CD8-positive, alpha-beta T cell (primary cell): ENCODE measurements at regions of chr6 and their contacts with region 1.

Region 1: GRCh38 chr6:46862381-46862780 is 59.4 kb downstream of the ADGRF5 start:
- DNase-seq: no peak
- ATAC-seq: no peak
- H3K4me3 ChIP-seq: no peak overlapping the region
- H3K4me3 Mint-ChIP-seq: no peak overlapping the region
- H3K27ac ChIP-seq: no peak overlapping the region
- H3K27ac Mint-ChIP-seq: no peak overlapping the region
- H3K4me1 ChIP-seq: no peaks in the 10 kb centered on the region
- H3K4me1 Mint-ChIP-seq: no peaks in the 10 kb centered on the region
- H3K27me3 ChIP-seq: no peaks in the 10 kb centered on the region
- H3K27me3 Mint-ChIP-seq: peaks cover 7% of the 10 kb centered on the region
- CTCF ChIP-seq: no peak

Region 2: GRCh38 chr6:46221222-46221793 is 641.1 kb before region 1 on chr6:
- CTCF ChIA-PET with region 1: no interaction called
- POLR2A ChIA-PET with region 1: no interaction called
- intact Hi-C with region 1: loop called in 1 of 2 experiments (anchors 5 kb)
- DNase-seq: peak in 2 of 9 experiments; percentile 45 to 52
- ATAC-seq: no peak
- H3K4me3 ChIP-seq: no peak overlapping the region
- H3K4me3 Mint-ChIP-seq: no peak overlapping the region
- H3K27ac ChIP-seq: no peak overlapping the region
- H3K27ac Mint-ChIP-seq: no peak overlapping the region
- H3K4me1 ChIP-seq: no peaks in the 10 kb centered on the region
- H3K4me1 Mint-ChIP-seq: no peaks in the 10 kb centered on the region
- H3K27me3 ChIP-seq: no peaks in the 10 kb centered on the region
- H3K27me3 Mint-ChIP-seq: no peaks in the 10 kb centered on the region
- CTCF ChIP-seq: peak; percentile 41